Left colon (tissue), 2 donors: ENCODE measurements at regions of chr19 and their contacts with region 1.

Region 1: DNA sequence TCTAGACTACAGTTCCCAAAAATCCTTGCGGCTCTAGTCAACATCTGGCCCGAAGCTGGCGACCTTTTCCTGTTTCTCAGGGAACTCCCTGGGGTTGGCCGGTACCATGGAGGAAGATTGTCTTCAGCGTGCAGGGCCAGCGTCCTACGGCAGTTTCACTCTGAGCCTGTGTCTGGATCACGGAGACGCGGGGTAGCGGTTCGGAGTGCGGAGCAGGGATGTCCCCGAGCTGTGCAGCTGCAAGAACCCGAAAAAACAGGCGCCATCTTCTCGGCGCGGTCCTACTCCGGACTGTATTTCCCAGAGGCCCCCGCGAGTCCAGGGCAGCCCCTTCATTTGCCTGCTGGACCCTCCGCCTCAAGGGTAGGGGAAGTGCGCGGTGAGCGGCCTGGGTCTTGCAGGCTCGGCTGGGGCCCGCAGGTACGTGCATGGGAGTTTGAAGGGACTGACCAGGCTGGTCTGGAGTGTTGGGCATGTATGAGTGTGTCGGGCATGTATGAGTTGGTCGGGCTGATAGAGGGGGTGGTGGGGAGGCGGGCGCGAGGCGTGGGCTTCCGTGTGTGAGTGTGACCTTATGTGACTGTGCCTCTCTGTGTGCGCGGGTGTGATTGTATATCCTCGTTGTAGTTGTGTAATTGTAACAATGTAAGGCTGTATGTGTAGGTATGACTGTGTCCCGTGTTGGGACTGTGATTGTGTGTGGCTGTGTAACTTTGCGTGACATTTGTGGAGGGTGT is at the start of gene ZNF383:
- DNase-seq: peak; percentile 88 to 90
- ATAC-seq: peak; percentile 97
- total RNA-seq, gene ZNF383: 8.4 to 9.0 TPM

Region 2: DNA sequence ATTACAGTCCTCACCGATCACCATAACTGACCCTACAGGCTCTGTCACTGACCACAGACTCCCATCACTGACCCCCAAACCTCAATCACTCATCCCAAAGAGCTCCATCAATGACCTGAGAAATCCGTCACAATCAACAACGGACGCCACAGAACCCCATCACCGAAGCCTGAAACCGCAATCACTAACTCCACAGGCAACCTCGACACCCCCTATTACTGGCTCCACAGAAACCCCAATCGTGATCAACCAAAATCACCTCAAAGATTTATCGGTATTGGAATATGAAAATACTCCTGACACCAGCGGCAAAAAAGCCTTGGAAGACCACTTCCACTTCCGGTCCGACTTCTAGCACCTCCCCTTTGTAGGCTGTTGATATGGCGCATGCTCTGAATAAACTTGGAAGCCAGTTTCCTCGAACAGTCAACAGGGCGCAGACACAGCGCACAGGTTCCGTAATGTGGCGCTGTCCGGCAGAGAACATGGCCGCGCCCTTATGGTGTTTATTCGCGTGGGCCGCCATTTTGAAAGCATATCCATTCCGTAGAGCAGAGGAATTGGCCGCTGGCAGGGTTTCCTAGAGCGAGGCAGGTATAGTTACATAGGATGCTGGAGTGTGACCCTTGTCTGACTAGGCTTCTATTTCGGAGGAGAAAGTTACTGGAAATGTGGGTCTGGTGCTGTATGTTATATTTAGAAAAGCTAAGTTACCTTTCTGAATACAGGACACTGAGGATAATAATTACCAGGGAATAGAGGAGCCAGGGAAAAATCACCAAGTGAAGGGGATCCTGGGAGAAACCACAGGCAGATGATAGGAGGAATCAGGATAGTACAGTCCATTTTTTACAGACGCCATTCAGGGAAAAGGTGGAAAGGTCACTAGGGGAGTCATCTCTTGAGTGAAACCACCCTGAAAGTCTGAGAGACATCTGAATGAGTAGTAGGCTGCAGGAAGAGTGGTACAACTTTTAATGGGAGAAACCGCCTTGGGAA is 45.4 kb before region 1 on chr19 and contains the start of gene ZNF585A:
- intact Hi-C with region 1: loop called in 1 of 2 experiments (anchors 5 kb)
- DNase-seq: peak; percentile 91 to 94
- ATAC-seq: peak; percentile 100
- total RNA-seq, gene ZNF585A: 7.6 to 10.3 TPM